ENCODE measurements at regions of chr22 and their contacts with region 1.

Region 1: GRCh38 chr22:36613958-36614357 is 85.0 kb upstream of the EIF3D start:
- DNase-seq: no peak
- H3K4me3 ChIP-seq: no peak overlapping the region
- H3K27ac ChIP-seq: no peak overlapping the region
- H3K4me1 ChIP-seq: no peaks in the 10 kb centered on the region
- H3K27me3 ChIP-seq: peaks cover 12% of the 10 kb centered on the region
- CTCF ChIP-seq: no peak

Region 2: DNA sequence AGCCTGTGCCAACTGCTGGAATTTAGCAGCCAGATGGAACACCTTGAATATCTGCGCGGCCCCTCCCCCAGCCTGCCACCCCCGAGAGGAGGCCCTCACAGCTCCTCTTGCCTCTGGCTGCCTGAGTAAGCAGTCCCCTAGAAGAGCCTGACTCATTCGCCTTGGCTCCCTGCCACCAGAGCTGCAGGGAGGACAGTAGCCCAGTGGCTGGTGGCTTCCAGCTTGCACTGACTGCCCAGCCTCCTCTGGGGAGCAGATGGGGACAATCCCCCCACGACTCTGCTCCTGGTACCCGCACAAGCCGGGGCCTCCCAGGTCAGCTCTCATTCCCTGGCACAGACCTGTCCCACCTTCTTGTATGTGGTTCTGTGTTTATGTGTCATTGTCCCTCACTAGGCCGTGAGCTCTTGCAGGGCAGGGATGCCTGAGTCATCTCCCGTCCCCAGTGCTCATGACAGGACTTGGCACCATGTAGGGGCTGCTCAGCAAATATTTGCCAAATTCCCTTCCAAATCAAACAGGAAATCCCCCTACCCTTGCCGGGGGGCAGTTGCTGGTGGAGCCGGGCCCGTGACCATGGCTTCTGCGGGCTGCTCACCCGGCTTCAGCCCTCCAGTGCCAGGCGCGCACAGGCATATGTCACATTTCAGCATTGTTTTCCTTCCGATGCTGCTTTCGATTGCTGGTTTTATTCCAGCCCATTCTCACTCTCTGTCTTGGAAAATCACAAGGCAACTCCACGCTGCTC is 46.0 kb after region 1 on chr22:
- CTCF ChIA-PET with region 1: no interaction called
- dilution Hi-C with region 1: loop called (anchors 5 kb)
- in situ Hi-C with region 1: no loop called
- intact Hi-C with region 1: no loop called
- DNase-seq: peak; percentile 88
- H3K4me3 ChIP-seq: no peak overlapping the region
- H3K27ac ChIP-seq: no peak overlapping the region
- H3K4me1 ChIP-seq: peaks cover 31% of the 10 kb centered on the region
- H3K27me3 ChIP-seq: no peaks in the 10 kb centered on the region
- CTCF ChIP-seq: no peak

Measured in mammary epithelial cell (primary cell).